ENCODE measurements at regions of chr5 and their contacts with region 1.

Region 1: GRCh38 chr5:118987988-118988865 is at the start of gene DTWD2:
- DNase-seq: peak; percentile 90
- H3K4me3 ChIP-seq: peak within 1 kb of the TSS; percentile 45 to 60
- H3K27ac ChIP-seq: peak within 1 kb of the TSS; percentile 80 to 92
- H3K4me1 ChIP-seq: no peaks in the 10 kb centered on the region
- H3K27me3 ChIP-seq: no peaks in the 10 kb centered on the region
- CTCF ChIP-seq: peak; percentile 87 to 98 (median 92)
- POLR2A ChIP-seq: peak; percentile 26
- total RNA-seq, gene DTWD2: 13.4 to 15.5 TPM

Region 2: DNA sequence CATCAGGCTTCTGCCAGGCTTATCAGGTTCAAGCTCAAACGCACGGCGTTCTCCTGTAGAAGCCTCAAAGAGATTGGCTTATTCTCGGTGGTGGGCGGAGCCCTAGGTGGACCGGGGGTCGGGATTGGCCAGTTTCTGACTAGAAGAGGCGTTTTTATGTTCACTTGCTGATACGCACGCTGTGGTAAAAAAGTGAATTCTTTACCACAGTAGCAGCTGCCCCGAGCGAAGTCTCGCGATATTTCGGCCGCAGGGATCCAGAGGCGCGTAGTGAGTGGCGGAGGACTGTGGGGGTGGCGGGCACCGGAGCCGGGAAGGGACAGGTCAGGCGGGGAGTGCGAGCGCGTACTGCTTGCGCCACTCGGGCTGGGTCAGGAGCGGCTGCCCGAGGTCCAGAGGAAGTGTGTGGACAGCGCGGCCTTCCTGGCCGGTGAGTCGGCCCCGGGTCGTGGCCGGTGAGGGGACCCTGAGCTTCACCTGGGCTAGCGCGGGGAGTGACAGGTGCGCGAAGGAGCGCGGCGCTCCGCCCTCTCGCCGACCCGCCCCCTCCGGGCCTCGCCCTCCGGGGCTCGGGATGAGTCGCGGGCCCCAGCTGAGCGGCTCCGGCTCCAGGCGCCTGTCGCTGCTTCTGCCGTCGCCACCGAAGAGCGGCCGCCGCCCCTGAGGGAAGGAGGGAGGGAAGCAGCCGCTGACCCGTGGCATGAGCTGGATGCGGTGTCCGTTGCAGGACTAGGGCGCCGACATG is 82.8 kb after region 1 on chr5 and contains the start of gene DMXL1:
- intact Hi-C with region 1: loop called (anchors 2 kb)
- DNase-seq: peak; percentile 100
- H3K4me3 ChIP-seq: peak within 1 kb of the TSS; percentile 84 to 91
- H3K27ac ChIP-seq: peak within 1 kb of the TSS; percentile 97 to 98
- H3K4me1 ChIP-seq: peaks cover 3% of the 10 kb centered on the region
- H3K27me3 ChIP-seq: no peaks in the 10 kb centered on the region
- CTCF ChIP-seq: peak in 1 of 4 experiments; percentile 8
- POLR2A ChIP-seq: peak; percentile 68
- total RNA-seq, gene DMXL1: 89.2 to 180 TPM

Region 3: GRCh38 chr5:119229950-119230349 is 241.7 kb after region 1 on chr5:
- intact Hi-C with region 1: no loop called
- DNase-seq: no peak
- H3K4me3 ChIP-seq: no peak overlapping the region
- H3K27ac ChIP-seq: no peak overlapping the region
- H3K4me1 ChIP-seq: no peaks in the 10 kb centered on the region
- H3K27me3 ChIP-seq: no peaks in the 10 kb centered on the region
- CTCF ChIP-seq: no peak
- POLR2A ChIP-seq: no peak

Region 4: DNA sequence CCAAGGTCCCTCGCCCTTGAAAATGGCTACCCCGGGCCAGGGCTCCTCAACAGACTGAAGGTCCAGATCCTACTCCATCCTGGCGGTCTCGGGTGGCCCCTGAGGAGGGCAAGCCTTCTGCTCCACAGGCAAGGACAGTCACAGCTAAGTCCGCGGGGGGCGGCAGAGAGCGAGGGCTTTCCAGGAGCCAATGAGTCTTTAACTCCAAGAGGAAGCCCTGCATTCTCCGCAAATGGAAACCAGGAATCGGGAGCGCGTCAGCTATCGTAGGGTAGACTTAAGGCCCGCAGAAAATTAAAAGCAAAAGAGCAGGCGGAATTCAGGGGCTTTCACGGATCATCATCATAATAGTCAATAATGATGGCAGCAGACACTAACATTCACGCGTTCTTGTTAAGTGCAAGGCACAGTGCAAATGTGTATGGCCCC is 279.7 kb after region 1 on chr5:
- intact Hi-C with region 1: loop called (anchors 5 kb)
- DNase-seq: peak; percentile 89
- H3K4me3 ChIP-seq: peak overlapping the region; percentile 72 to 81
- H3K27ac ChIP-seq: peak overlapping the region; percentile 86 to 93
- H3K4me1 ChIP-seq: peaks cover 5% of the 10 kb centered on the region
- H3K27me3 ChIP-seq: no peaks in the 10 kb centered on the region
- CTCF ChIP-seq: peak in 1 of 4 experiments; percentile 25
- POLR2A ChIP-seq: no peak

Region 5: DNA sequence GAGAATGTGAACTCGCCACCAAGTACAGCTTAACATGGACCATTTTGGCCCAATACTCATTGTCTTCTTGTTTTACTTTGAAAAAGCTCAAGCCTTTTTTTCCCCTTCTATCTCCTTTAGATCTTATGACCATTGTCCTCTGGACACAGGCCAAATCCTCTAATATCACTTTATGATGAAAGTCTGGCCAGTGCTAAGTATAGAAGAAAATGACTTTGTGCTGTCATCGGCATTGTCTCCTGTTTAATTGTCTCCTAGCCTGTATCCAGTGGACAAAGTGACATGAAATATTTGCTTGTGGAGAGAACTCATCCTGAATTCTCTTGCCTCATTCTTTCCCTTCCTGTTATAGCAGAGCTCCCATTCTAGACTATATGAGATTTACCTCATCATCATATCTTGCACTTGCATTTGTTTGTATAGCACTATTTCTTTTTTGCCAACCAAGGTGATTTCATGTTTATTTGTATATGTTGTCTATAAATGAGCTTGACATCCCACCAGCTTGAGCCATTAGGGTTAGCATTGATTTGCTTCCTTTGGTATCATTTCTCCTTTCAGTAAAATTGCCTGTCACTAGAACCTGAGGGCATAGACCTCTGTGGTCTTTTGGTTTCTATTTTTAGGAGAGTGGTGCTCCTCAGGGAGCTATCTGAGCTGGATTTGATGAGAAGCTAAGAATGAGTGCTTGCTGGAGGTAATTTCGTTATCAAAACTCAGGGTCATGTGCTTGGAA is 348.8 kb after region 1 on chr5:
- intact Hi-C with region 1: loop called (anchors 5 kb)
- DNase-seq: no peak
- H3K4me3 ChIP-seq: no peak overlapping the region
- H3K27ac ChIP-seq: no peak overlapping the region
- H3K4me1 ChIP-seq: peaks cover 6% of the 10 kb centered on the region
- H3K27me3 ChIP-seq: no peaks in the 10 kb centered on the region
- CTCF ChIP-seq: no peak
- POLR2A ChIP-seq: no peak

Region 6: GRCh38 chr5:119411935-119412602 is 423.8 kb after region 1 on chr5:
- intact Hi-C with region 1: loop called (anchors 1 kb)
- DNase-seq: peak; percentile 66
- H3K4me3 ChIP-seq: peak overlapping the region; percentile 19 to 39
- H3K27ac ChIP-seq: peak overlapping the region; percentile 66 to 70
- H3K4me1 ChIP-seq: no peaks in the 10 kb centered on the region
- H3K27me3 ChIP-seq: no peaks in the 10 kb centered on the region
- CTCF ChIP-seq: peak; percentile 91 to 96 (median 94)
- POLR2A ChIP-seq: no peak